GM10248 (cell line): ENCODE measurements at regions of chr11 and their contacts with region 1.

Region 1: DNA sequence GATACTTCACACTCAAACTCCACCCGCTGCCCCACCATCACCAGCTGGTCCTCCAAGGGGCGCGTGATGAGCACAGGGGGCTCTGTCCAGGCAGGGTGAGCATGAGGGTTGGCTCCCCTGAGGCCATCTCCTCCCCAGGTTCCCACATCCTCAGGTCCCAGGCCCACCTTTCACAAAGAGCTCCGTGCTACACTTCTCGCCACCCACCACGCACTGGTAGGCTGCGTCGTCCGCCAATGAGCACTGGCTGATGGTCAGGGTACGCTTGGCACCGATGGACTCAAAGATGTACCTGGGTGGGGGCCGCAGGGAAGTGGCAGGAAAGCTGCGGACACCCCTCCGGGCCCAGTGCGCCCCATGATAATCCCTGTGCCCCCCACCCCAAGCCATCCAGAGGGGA is 9.6 kb downstream of the MYBPC3 start:
- DNase-seq: no peak
- CTCF ChIP-seq: no peak

Region 2: DNA sequence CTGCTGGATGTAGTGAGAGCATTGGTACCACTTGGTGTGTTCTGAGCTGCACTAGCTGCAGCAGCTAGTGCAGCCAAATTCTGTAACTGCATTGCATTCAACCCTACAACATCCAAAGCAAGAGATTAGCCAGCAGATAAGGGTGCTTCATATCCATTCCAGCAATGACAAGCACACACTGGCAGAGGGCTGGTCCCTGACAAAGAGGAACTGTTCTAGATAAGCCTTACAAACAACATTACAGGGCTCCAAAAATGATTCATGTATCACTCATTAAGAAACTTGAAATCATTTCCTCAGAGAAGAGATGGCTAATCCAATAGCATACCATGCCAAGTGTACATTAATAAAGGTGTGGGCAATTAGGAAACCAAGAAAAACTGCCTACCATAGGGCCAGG is 134.5 kb after region 1 on chr11:
- CTCF ChIA-PET with region 1: no interaction called
- POLR2A ChIA-PET with region 1: no interaction called
- DNase-seq: no peak
- CTCF ChIP-seq: no peak

Region 3: GRCh38 chr11:47686151-47686550 is 343.3 kb after region 1 on chr11:
- CTCF ChIA-PET with region 1: no interaction called
- POLR2A ChIA-PET with region 1: interaction called, 11 read pairs
- DNase-seq: no peak
- CTCF ChIP-seq: no peak